ENCODE measurements at regions of chr3 and their contacts with region 1.

Region 1: GRCh38 chr3:39485547-39485946 is 18.1 kb downstream of the MOBP start:
- DNase-seq: no peak
- ATAC-seq: no peak

Region 2: GRCh38 chr3:39434574-39434973 is 51.0 kb before region 1 on chr3:
- intact Hi-C with region 1: loop called in 1 of 2 experiments (anchors 10 kb)
- DNase-seq: no peak
- ATAC-seq: no peak